GM13976 (cell line): ENCODE measurements at regions of chr5 and their contacts with region 1.

Region 1: GRCh38 chr5:157069949-157070348 is 11.0 kb upstream of the HAVCR1 start:
- DNase-seq: no peak
- CTCF ChIP-seq: no peak

Region 2: GRCh38 chr5:157120102-157120501 is 50.2 kb after region 1 on chr5:
- in situ Hi-C with region 1: loop called (anchors 10 kb)
- DNase-seq: no peak
- CTCF ChIP-seq: no peak